Activated CD4-positive, alpha-beta T cell treated with anti-CD3 and anti-CD28 coated beads for 36 hours (primary cell): ENCODE measurements at regions of chr16 and their contacts with region 1.

Region 1: DNA sequence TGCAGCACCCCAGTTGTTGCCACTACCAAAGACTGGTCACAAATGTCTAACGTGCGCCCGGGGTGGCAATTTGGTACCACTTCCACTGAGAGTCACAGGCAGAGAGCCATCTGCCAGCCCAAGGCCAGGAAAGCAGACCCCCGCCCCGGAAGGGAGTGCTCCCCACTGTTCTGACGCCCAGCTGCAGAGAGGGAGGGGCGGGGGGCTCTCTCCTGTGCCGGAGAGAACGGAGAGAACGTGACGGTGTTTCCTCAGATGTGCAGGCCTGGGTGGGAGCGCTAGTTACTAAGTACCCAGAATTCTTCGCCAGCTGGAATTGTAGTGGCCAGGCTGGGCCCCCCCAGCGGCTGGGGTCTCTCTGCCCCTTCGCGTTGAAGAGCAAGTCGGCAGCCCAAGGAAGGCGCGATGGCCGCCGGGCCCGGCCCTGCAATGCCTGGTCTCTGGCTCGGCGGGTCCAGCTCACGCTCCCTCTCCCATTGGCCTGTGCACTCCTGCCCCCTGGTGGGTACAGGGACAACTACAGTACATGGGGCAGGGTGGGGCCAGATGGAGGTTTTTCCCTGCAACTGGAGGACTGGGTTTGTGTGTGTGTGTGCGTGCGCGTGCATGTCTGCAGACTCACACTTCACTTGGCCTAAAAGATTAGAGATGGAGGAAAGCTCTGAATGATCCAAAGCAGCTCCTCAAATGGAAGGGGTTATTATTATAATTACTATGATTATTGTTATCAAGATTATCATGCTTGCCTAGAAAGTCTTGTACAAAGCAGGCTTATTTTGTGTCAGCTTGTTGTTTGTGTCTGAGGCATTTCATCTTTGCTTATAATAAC is 107.1 kb downstream of the AMFR start:
- DNase-seq: peak; percentile 89
- ATAC-seq: peak; percentile 99
- H3K4me3 Mint-ChIP-seq: no peak overlapping the region
- H3K27ac Mint-ChIP-seq: no peak overlapping the region
- H3K4me1 Mint-ChIP-seq: peaks cover 4% of the 10 kb centered on the region
- H3K27me3 Mint-ChIP-seq: peaks cover 4% of the 10 kb centered on the region

Region 2: GRCh38 chr16:55711959-55712876 is 606.0 kb before region 1 on chr16:
- CTCF ChIA-PET with region 1: no interaction called
- POLR2A ChIA-PET with region 1: no interaction called
- intact Hi-C with region 1: loop called (anchors 1 to 2 kb)
- DNase-seq: peak; percentile 79
- ATAC-seq: peak; percentile 64
- H3K4me3 Mint-ChIP-seq: no peak overlapping the region
- H3K27ac Mint-ChIP-seq: no peak overlapping the region
- H3K4me1 Mint-ChIP-seq: no peaks in the 10 kb centered on the region
- H3K27me3 Mint-ChIP-seq: peaks cover 13% of the 10 kb centered on the region

Region 3: GRCh38 chr16:55842369-55843104 is 475.7 kb before region 1 on chr16:
- CTCF ChIA-PET with region 1: interaction called, 4 read pairs
- POLR2A ChIA-PET with region 1: no interaction called
- intact Hi-C with region 1: loop called in 1 of 2 experiments (anchors 1 kb)
- DNase-seq: peak; percentile 27
- ATAC-seq: peak; percentile 44
- H3K4me3 Mint-ChIP-seq: no peak overlapping the region
- H3K27ac Mint-ChIP-seq: no peak overlapping the region
- H3K4me1 Mint-ChIP-seq: no peaks in the 10 kb centered on the region
- H3K27me3 Mint-ChIP-seq: peaks cover 17% of the 10 kb centered on the region

Region 4: DNA sequence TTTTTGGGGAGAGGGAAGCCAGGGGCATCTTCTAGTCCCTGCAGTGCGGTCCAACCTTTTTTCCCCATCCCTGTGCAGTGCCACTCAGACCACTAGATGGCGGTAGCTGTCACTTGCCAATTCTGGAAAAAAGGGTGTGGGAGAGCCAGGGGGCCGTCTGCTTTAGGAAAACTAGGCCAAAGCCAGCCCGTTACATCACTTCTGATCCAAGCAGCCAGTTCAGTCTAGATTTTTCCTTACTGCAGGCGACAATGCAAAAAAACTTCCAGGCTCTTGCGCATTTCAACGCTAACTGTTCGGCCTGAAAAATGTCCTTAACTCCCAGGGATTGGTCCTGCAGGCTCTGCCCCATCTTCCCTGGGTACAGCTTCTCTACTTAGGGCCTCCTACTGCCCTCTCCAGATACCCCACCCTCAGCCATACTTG is 373.8 kb before region 1 on chr16:
- CTCF ChIA-PET with region 1: interaction called, 21 read pairs
- POLR2A ChIA-PET with region 1: no interaction called
- intact Hi-C with region 1: loop called (anchors 1 kb)
- DNase-seq: peak; percentile 68
- ATAC-seq: peak; percentile 39
- H3K4me3 Mint-ChIP-seq: no peak overlapping the region
- H3K27ac Mint-ChIP-seq: no peak overlapping the region
- H3K4me1 Mint-ChIP-seq: no peaks in the 10 kb centered on the region
- H3K27me3 Mint-ChIP-seq: peaks cover 35% of the 10 kb centered on the region

Region 5: DNA sequence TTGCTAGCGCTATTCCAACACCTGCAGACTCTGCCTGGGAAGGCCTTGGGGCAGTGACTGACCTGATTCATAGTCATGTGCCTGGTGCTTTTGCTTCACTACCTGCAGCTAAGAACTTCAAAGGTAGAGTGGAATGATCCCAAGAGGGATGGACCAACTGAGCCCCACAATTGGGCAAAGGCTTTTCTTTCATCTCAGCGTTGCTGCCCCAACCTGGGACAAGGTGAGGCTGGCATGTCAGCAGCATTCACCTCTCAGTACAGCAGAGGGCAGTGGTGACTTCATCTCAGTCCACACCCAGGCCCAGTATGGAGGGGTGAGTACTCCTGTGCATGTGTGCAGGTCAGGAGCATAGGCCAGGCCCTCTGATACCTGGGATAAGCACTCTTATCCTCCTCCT is 276.5 kb before region 1 on chr16:
- CTCF ChIA-PET with region 1: interaction called, 10 read pairs
- POLR2A ChIA-PET with region 1: no interaction called
- intact Hi-C with region 1: loop called (anchors 1 to 2 kb)
- DNase-seq: peak; percentile 60
- ATAC-seq: peak; percentile 86
- H3K4me3 Mint-ChIP-seq: no peak overlapping the region
- H3K27ac Mint-ChIP-seq: no peak overlapping the region
- H3K4me1 Mint-ChIP-seq: no peaks in the 10 kb centered on the region
- H3K27me3 Mint-ChIP-seq: peaks cover 18% of the 10 kb centered on the region

Region 6: DNA sequence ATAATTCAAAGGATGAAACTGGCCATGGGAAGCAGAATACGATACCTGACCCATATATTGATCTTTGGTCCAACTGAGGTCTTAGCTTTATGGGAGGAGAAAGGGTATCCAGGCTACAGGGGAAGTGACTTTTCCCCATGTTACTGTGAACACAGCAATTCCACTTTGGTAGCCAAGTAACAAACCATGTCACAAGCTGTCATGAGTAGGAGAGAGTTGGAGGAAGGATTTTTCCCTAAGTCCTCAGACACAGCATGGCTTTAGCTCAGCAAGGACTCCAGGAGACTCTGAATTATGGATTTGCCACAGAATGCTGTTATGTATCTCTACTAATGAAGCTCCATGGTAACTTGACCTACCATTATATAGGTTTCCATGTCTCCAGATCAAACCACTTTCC is 183.4 kb before region 1 on chr16:
- CTCF ChIA-PET with region 1: no interaction called
- POLR2A ChIA-PET with region 1: no interaction called
- intact Hi-C with region 1: no loop called
- DNase-seq: no peak
- ATAC-seq: no peak
- H3K4me3 Mint-ChIP-seq: no peak overlapping the region
- H3K27ac Mint-ChIP-seq: no peak overlapping the region
- H3K4me1 Mint-ChIP-seq: peaks cover 6% of the 10 kb centered on the region
- H3K27me3 Mint-ChIP-seq: peaks cover 28% of the 10 kb centered on the region

Region 7: GRCh38 chr16:56305956-56306565 is 12.2 kb before region 1 on chr16:
- CTCF ChIA-PET with region 1: interaction called, 30 read pairs
- POLR2A ChIA-PET with region 1: no interaction called
- intact Hi-C with region 1: no loop called
- DNase-seq: no peak
- ATAC-seq: no peak
- H3K4me3 Mint-ChIP-seq: no peak overlapping the region
- H3K27ac Mint-ChIP-seq: no peak overlapping the region
- H3K4me1 Mint-ChIP-seq: peaks cover 5% of the 10 kb centered on the region
- H3K27me3 Mint-ChIP-seq: no peaks in the 10 kb centered on the region